Endothelial cell of umbilical vein (primary cell): ENCODE measurements at regions of chr1 and their contacts with region 1.

Region 1: DNA sequence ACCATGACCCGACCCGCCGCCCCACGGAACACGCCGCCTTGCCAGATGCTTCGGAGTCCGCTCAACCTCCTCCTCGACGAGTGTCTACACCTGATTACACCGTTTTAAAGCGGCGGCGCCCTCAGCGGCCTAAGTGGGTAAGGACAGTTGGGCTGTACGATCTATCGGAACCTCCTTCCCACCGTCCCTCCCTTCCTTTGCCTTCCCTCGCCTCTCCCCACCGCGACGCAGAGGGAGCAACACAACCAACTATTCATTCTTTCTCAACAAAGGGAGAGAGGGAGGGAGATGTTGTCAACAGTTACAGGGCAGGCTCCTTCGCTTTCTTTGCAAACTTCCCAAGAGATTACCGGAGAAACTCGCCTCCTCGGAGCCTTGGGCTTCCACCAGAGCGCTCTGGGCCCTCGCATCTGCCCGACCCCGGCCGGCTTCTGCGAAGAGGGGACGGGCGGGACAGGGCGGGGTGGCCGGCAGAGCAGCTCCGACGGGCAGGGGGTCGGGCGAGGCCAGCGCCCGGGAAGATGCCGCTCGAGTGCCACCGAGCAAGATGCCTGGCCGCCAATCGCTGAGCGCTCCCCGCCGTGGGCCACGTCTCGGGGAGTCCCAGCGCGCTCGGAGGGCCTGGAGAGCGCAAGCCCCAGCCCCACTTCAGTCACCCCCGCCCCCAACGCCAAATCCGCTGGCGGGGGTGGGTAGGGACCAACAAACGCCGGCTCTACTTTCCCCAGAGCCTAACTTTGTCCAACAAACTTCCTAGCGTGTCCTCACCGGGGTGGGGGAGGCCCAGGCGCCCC is 683 bp downstream of the BCAR3 start:
- DNase-seq: peak; percentile 89
- H3K4me3 ChIP-seq: peak overlapping the region; percentile 55 to 80 (median 72)
- H3K27ac ChIP-seq: peak overlapping the region; percentile 84
- H3K4me1 ChIP-seq: peaks cover 42% of the 10 kb centered on the region
- H3K27me3 ChIP-seq: no peaks in the 10 kb centered on the region
- CTCF ChIP-seq: peak; percentile 38 to 70
- POLR2A ChIP-seq: peak; percentile 62

Region 2: DNA sequence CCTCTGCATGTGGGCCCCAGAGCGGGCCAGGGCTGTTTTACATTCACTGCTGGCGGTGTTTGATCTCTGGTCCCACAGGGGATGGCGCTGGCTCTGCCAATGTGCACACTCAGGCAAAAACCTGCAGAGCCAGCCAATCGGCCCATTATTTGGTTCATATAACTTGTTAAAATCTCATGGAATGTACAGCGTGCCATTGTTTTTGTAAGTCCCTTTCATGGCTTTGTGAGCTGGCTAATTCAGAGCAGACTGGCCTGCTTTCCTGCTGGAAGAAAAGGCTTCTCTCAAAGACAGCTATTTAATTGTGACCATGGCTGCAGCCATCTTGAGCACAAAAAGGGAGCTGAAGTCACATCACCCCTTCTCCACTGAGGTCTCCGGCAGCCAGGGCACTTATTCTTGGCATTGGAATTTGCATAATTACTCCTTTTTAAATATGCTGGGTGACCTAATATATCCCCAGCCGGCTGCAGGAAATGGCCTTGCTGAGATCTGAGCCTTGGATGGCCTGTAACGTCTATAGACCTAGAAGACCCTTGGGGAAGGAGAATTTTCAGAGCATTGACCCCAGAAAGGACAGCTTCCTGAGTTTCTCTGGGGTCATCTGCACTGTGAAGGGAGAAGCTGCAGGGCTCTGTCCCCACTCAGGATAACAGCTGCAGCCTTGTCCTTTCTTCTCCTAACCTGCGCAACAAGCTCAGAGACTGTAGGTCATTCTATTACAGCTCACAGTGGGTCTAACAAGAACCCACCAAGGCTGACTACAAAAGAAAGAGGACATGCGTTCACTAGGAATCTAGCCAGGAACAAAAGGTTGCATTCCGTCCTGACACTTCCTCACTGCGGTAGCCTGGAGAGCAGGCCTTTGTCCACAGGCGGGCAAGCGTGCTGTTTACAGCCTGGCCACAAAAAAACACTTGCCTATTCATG is 45.1 kb before region 1 on chr1:
- CTCF ChIA-PET with region 1: interaction called, 69 read pairs
- POLR2A ChIA-PET with region 1: no interaction called
- dilution Hi-C with region 1: no loop called
- intact Hi-C with region 1: no loop called
- DNase-seq: peak; percentile 73
- H3K4me3 ChIP-seq: no peak overlapping the region
- H3K27ac ChIP-seq: peak overlapping the region; percentile 60
- H3K4me1 ChIP-seq: peaks cover 13% of the 10 kb centered on the region
- H3K27me3 ChIP-seq: no peaks in the 10 kb centered on the region
- CTCF ChIP-seq: peak in 1 of 2 donors; percentile 6
- POLR2A ChIP-seq: no peak

Region 3: GRCh38 chr1:93649231-93649630 is 31.7 kb before region 1 on chr1:
- CTCF ChIA-PET with region 1: interaction called, 10 read pairs
- POLR2A ChIA-PET with region 1: no interaction called
- dilution Hi-C with region 1: no loop called
- intact Hi-C with region 1: no loop called
- DNase-seq: no peak
- H3K4me3 ChIP-seq: no peak overlapping the region
- H3K27ac ChIP-seq: no peak overlapping the region
- H3K4me1 ChIP-seq: no peaks in the 10 kb centered on the region
- H3K27me3 ChIP-seq: no peaks in the 10 kb centered on the region
- CTCF ChIP-seq: no peak
- POLR2A ChIP-seq: no peak

Region 4: DNA sequence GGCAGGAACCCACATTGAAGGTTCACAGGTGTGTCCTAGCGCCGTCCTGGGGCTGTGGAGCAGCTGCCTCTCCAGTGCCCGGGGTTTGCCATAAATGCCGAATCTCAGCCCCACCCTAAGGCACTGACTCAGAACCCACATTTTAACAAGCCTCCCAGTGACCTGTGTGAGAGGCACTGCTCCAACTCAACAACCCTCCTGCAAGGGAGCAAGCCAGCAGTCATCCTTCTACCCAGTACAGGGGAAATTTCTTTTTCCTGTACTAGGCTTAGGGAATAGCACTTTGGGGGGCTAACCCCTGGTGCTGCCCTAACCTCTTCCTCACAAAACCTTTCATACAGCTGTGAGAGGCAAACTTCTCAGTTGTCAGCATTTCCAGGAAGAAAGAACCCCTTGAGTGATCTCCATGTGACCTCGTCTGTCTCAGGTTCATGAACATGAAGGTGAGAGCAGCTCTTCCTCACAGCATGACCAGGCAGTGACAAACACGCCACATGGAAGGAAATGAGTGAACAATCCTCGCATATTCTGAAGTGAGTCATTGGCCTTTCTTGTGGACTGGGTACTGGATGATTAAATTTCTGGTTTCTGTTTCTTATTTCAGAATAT is 12.1 kb after region 1 on chr1:
- CTCF ChIA-PET with region 1: interaction called, 13 read pairs
- POLR2A ChIA-PET with region 1: no interaction called
- dilution Hi-C with region 1: no loop called
- intact Hi-C with region 1: loop called (anchors 1 kb)
- DNase-seq: peak; percentile 77
- H3K4me3 ChIP-seq: no peak overlapping the region
- H3K27ac ChIP-seq: peak overlapping the region; percentile 85
- H3K4me1 ChIP-seq: peaks cover 27% of the 10 kb centered on the region
- H3K27me3 ChIP-seq: no peaks in the 10 kb centered on the region
- CTCF ChIP-seq: no peak
- POLR2A ChIP-seq: no peak

Region 5: GRCh38 chr1:93722081-93723031 is 41.4 kb after region 1 on chr1:
- CTCF ChIA-PET with region 1: no interaction called
- POLR2A ChIA-PET with region 1: no interaction called
- dilution Hi-C with region 1: no loop called
- intact Hi-C with region 1: loop called (anchors 5 kb)
- DNase-seq: peak; percentile 89
- H3K4me3 ChIP-seq: no peak overlapping the region
- H3K27ac ChIP-seq: peak overlapping the region; percentile 74
- H3K4me1 ChIP-seq: peaks cover 23% of the 10 kb centered on the region
- H3K27me3 ChIP-seq: no peaks in the 10 kb centered on the region
- CTCF ChIP-seq: peak; percentile 21 to 36
- POLR2A ChIP-seq: no peak